Testis (tissue), 5 donors: ENCODE measurements at regions of chr18 and their contacts with region 1.

Region 1: GRCh38 chr18:77101410-77102258 is 30.9 kb downstream of the MBP start:
- DNase-seq: peak; percentile 76
- H3K4me3 ChIP-seq: no peak overlapping the region
- H3K27ac ChIP-seq: peak overlapping the region; percentile 53 to 85
- H3K4me1 ChIP-seq: peaks cover 17% of the 10 kb centered on the region
- H3K27me3 ChIP-seq: no peaks in the 10 kb centered on the region
- CTCF ChIP-seq: no peak
- POLR2A ChIP-seq: no peak

Region 2: DNA sequence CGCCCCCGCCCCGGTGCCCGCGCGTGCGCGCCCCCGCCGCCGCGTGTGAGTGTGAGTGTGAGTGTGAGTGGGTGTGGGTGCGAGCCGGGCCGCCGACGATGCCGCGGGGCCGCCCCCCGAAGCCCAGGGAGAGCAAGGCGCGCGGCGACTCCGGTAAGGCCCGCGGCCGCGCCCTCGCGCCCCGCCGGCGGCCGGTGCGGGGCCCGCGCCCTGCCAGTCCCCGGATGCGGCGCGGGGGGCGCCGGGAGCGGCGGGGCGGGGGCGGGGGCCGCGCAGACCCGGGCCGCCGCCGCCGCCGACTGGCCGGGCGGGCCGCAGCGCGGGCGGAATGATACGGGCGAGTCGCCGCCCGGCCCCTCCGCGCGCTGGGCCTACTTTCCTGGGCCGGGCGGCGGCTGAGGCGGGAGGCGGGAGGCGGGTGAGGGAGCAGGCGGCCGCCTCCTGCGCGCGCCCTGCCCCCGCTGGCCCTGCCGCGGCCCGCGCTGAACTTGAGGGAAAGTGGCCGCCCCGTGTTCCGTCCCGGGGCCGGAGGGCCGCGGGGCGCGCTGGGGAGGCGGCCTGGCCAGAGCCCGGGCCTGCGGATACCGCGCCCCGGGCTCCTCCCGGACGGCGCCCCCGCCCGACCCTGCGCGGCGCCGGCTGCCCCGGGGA is 279.0 kb before region 1 on chr18 and contains the start of gene ZNF236:
- intact Hi-C with region 1: no loop called
- DNase-seq: peak; percentile 71
- H3K4me3 ChIP-seq: peak within 1 kb of the TSS; percentile 87 to 90
- H3K27ac ChIP-seq: peak within 1 kb of the TSS; percentile 93 to 96
- H3K4me1 ChIP-seq: peaks cover 28% of the 10 kb centered on the region
- H3K27me3 ChIP-seq: no peaks in the 10 kb centered on the region
- CTCF ChIP-seq: no peak
- POLR2A ChIP-seq: no peak
- total RNA-seq, gene ZNF236: 53.9 to 58.2 TPM

Region 3: DNA sequence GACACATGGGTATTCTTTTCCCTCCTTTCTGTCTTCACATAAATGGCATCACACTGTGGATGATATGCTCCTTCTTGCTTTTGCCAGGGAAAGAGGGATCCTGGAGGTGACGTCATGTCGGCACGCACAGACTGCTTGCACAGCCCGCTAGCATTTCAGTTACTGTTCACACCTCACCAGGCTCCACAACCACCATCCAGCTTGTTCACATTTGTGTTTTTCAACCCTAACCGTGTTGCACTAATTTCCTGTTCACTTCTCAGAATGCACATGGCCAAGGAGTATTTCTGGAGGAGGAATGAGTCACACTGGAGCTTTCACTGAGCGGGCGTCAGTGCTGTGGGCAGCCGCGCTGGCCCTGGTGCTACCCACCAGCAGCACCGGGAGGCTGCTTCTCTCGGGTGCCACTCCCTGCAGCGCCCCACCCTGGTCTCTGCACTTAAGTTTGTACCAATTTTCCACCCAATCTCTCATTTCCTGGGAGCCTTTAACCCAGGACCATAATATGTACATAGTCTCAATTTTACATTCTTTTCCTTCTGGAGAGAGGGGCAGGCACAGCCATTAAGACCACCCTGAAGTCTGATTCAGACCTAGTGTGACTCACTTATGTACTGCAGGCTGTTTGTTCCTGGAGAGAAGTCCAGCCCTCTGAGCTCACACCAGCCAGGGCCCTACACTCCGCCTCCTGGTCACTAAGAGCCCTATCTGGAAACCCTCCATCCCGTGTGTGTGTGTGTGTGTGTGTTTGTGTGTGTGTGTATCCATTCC is 34.2 kb before region 1 on chr18:
- intact Hi-C with region 1: loop called (anchors 5 kb)
- DNase-seq: peak; percentile 59
- H3K4me3 ChIP-seq: no peak overlapping the region
- H3K27ac ChIP-seq: peak overlapping the region; percentile 66 to 82
- H3K4me1 ChIP-seq: peaks cover 25% of the 10 kb centered on the region
- H3K27me3 ChIP-seq: no peaks in the 10 kb centered on the region
- CTCF ChIP-seq: no peak
- POLR2A ChIP-seq: no peak

Region 4: GRCh38 chr18:77271576-77272481 is 170.2 kb after region 1 on chr18:
- intact Hi-C with region 1: no loop called
- DNase-seq: no peak
- H3K4me3 ChIP-seq: no peak overlapping the region
- H3K27ac ChIP-seq: no peak overlapping the region
- H3K4me1 ChIP-seq: no peaks in the 10 kb centered on the region
- H3K27me3 ChIP-seq: no peaks in the 10 kb centered on the region
- CTCF ChIP-seq: no peak
- POLR2A ChIP-seq: no peak